Activated B cell treated with CpG ODN at 0.5 μM for 24 hours (primary cell): ENCODE measurements at regions of chr11 and their contacts with region 1.

Region 1: DNA sequence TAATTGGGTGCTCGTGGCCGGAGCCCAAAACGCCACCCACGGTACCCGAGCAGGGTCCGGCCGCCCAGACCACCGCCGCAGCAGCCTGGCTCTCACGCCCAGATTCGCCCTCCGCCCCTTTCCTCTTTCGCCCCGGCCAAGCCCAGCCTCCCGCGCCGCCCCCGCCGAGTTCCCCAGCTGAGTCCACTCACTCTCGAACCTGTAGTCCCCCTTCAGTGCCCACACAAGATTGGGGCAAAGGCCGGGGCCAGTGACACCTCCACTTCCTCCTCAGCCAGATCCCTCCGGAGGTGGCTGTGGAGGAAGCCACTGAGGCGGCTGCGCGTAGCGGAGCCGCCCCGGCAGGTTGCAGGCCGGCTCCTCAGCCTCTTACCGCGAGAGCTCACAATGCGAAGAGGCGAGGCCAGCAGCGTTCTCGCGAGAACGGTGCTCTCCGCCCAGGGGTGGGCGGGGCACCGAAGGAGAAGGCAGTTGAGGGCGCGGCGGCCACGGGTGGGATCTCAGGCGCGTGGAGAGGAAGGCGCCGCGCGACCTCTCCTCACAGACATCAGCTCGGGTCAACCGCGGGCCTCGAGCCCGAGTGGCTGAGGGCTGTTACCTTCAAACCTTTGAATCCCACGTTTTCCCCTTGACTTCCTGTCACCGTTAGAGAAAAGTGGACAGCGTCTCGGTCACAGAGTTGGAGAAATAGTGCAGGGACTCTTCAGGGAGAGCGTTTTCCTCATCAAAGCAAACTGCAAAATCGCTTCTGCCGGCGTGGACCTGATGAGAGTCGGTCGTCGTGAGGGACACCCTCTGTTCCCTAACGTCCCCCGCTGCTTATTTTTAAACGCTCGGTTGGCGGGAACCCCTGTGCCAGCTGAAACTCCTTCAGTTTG is at the start of gene BTBD10:
- DNase-seq: peak; percentile 91
- ATAC-seq: peak; percentile 98
- H3K4me3 Mint-ChIP-seq: peak within 1 kb of the TSS; percentile 98
- H3K27ac Mint-ChIP-seq: peak within 1 kb of the TSS; percentile 95
- H3K4me1 Mint-ChIP-seq: peaks cover 43% of the 10 kb centered on the region
- H3K27me3 Mint-ChIP-seq: no peaks in the 10 kb centered on the region
- CTCF ChIP-seq: no peak
- total RNA-seq, gene BTBD10: 18.8 and 25.1 TPM in 2 replicates

Region 2: GRCh38 chr11:13140028-13140870 is 322.9 kb before region 1 on chr11:
- CTCF ChIA-PET with region 1: no interaction called
- POLR2A ChIA-PET with region 1: no interaction called
- intact Hi-C with region 1: no loop called
- DNase-seq: no peak
- ATAC-seq: no peak
- H3K4me3 Mint-ChIP-seq: no peak overlapping the region
- H3K27ac Mint-ChIP-seq: no peak overlapping the region
- H3K4me1 Mint-ChIP-seq: no peaks in the 10 kb centered on the region
- H3K27me3 Mint-ChIP-seq: no peaks in the 10 kb centered on the region
- CTCF ChIP-seq: no peak

Region 3: DNA sequence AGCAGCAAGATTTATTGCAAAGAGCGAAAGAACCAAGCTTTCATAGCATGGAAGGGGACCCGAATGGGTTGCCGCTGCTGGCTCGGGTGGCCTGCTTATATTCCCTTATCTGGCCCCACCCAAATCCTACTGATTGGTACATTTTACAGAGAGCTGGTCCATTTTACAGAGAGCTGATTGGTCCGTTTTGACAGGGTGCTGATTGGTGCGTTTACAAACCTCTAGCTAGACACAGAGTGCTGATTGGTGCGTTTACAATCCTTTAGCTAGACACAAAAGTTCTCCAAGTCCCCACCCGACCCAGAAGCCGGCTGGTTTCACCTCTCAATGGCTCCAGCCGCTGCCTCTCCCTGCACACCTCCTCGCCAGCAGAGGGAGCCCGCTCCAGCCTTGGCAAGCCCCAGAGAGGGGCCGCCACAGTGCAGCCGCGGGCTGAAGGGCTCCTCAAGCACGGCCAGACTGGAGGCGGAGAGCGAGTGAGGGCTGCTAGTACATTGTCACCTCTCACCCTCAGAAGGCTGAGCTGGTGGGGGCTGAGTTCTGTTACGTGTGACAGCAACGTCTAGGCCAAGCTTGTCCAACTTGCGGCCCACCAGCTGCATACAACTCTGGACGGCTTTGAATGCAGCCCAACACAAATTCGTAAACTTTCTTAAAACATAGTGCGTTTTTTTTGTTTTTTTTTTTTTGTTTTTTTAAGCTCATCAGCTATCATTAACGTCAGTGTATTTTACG is 24.0 kb after region 1 on chr11:
- CTCF ChIA-PET with region 1: interaction called, 3 read pairs
- POLR2A ChIA-PET with region 1: interaction called, 8 read pairs
- intact Hi-C with region 1: loop called (anchors 1 kb)
- DNase-seq: peak; percentile 37
- ATAC-seq: peak; percentile 89
- H3K4me3 Mint-ChIP-seq: peak overlapping the region; percentile 74
- H3K27ac Mint-ChIP-seq: no peak overlapping the region
- H3K4me1 Mint-ChIP-seq: no peaks in the 10 kb centered on the region
- H3K27me3 Mint-ChIP-seq: peaks cover 4% of the 10 kb centered on the region
- CTCF ChIP-seq: no peak

Region 4: GRCh38 chr11:13942983-13943382 is 479.8 kb after region 1 on chr11:
- CTCF ChIA-PET with region 1: no interaction called
- POLR2A ChIA-PET with region 1: no interaction called
- intact Hi-C with region 1: no loop called
- DNase-seq: no peak
- ATAC-seq: no peak
- H3K4me3 Mint-ChIP-seq: no peak overlapping the region
- H3K27ac Mint-ChIP-seq: no peak overlapping the region
- H3K4me1 Mint-ChIP-seq: no peaks in the 10 kb centered on the region
- H3K27me3 Mint-ChIP-seq: peaks cover 9% of the 10 kb centered on the region
- CTCF ChIP-seq: no peak